Gastrocnemius medialis (tissue), 4 donors: ENCODE measurements at regions of chr11 and their contacts with region 1.

Region 1: DNA sequence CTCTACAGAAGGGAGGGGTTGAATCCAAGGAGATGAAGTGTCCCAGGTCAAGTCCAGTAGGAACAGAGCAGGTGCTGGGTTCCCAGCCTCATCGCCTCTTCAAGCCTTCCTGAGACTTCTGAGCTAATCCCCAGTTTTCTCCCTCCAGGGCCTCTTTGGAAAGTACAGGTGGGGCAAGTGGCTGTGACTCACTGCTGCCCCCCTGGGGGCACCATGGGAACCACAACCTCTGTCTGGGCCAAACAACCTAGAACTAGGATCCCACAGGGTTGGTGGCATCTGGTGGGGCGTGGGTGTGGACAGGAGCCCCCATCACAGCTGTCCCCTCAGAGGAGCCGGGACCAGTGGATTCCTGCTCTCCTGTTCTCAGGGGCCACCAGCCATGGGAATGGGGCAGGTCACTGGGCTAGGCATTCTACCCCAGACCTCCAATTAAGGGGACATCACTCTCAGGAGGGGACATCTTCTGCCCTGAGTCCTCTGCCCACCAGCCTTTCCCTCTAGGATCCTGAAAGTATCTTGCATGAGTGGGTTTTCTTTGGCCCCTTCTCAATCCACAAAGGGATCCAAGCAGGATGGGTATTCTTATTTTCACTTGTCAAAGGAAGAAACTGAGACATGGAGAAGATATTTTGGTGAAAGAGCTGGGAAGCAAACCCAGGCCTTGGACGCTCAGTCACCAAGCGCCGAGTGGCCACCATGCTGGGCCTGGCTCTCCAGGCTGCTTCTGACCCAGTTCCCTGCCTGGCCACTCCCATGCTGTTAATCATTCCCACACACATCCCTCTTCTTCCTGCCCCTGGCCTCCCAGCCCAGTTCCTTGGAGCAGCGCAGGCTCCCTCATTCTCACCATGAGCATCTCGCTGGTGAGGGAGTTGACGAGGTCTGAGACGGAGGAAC is 23.8 kb downstream of the LRRC10B start:
- DNase-seq: peak in 1 of 2 donors; percentile 28
- ATAC-seq: peak; percentile 31 to 55
- H3K4me3 ChIP-seq: no peak overlapping the region
- H3K27ac ChIP-seq: no peak overlapping the region
- H3K4me1 ChIP-seq: no peaks in the 10 kb centered on the region
- H3K27me3 ChIP-seq: no peaks in the 10 kb centered on the region
- CTCF ChIP-seq: peak; percentile 35 to 86 (median 70)
- POLR2A ChIP-seq: no peak

Region 2: DNA sequence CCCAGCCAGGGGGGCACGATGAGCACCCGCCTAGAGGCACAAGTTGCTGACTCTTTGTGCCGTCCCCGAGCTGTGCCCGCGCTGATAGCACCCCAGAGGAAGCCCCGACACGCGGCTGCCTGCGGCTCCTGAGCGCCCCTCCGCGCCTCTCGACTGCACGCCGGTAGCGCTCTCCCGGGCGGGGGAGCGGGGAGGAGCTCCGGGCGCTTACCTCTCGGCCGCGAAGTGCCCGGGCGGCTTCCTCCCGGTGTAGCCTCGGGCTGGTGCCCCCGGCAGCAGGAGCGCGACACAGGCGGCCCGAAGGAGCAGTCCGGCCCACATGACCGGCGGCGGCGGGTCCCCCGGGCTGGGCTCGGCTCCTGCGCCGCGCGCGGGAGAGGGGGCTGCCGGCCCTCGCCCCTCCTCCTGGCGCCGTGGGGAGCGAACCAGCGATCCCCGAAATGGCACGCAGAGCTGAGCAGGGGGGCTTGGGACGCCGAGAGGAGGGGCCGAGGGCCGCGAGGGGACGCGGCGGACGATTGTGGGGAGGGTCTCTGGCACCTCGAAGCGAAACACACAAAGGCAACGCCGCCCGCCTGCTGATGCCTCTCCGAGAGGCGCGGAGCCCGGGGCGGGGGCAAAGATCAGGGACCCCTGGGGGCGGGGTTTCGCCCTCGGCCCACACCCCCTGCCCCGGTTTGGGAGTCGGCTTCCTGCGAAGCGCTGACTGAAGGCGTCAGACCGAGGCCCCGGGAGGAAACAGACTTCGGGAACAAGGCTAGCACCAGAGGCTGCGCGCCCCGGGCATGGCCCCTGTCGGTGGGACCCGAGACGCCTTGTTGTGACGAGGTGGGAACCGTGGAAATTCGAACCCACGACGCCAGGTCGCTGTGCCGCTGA is 237.4 kb before region 1 on chr11 and contains the start of gene VWCE:
- in situ Hi-C with region 1: no loop called
- intact Hi-C with region 1: no loop called
- DNase-seq: peak in 1 of 2 donors; percentile 16
- ATAC-seq: peak; percentile 20 to 39
- H3K4me3 ChIP-seq: peak within 1 kb of the TSS; percentile 45 to 72 (median 57)
- H3K27ac ChIP-seq: no peak within 1 kb of the TSS
- H3K4me1 ChIP-seq: peaks cover 16 to 20% of the 10 kb centered on the region in 2 donors
- H3K27me3 ChIP-seq: peaks cover 0 to 9% (median 7%) of the 10 kb centered on the region in 3 donors
- CTCF ChIP-seq: no peak
- POLR2A ChIP-seq: no peak
- total RNA-seq, gene VWCE: 0.31 to 1.5 (median 0.67) TPM

Region 3: GRCh38 chr11:61406067-61406466 is 126.3 kb before region 1 on chr11:
- in situ Hi-C with region 1: no loop called
- intact Hi-C with region 1: no loop called
- DNase-seq: no peak
- ATAC-seq: peak; percentile 43 to 49
- H3K4me3 ChIP-seq: no peak overlapping the region
- H3K27ac ChIP-seq: peak overlapping the region in 2 of 4 donors; percentile 58 to 60
- H3K4me1 ChIP-seq: peaks cover 4 to 8% of the 10 kb centered on the region in 2 donors
- H3K27me3 ChIP-seq: no peaks in the 10 kb centered on the region
- CTCF ChIP-seq: no peak
- POLR2A ChIP-seq: no peak

Region 4: GRCh38 chr11:61460474-61460881 is 71.9 kb before region 1 on chr11:
- in situ Hi-C with region 1: no loop called
- intact Hi-C with region 1: no loop called
- DNase-seq: peak in 1 of 2 donors; percentile 67
- ATAC-seq: peak; percentile 45 to 79
- H3K4me3 ChIP-seq: no peak overlapping the region
- H3K27ac ChIP-seq: peak overlapping the region; percentile 21 to 38 (median 32)
- H3K4me1 ChIP-seq: peaks cover 9 to 14% of the 10 kb centered on the region in 2 donors
- H3K27me3 ChIP-seq: no peaks in the 10 kb centered on the region
- CTCF ChIP-seq: no peak
- POLR2A ChIP-seq: no peak

Region 5: DNA sequence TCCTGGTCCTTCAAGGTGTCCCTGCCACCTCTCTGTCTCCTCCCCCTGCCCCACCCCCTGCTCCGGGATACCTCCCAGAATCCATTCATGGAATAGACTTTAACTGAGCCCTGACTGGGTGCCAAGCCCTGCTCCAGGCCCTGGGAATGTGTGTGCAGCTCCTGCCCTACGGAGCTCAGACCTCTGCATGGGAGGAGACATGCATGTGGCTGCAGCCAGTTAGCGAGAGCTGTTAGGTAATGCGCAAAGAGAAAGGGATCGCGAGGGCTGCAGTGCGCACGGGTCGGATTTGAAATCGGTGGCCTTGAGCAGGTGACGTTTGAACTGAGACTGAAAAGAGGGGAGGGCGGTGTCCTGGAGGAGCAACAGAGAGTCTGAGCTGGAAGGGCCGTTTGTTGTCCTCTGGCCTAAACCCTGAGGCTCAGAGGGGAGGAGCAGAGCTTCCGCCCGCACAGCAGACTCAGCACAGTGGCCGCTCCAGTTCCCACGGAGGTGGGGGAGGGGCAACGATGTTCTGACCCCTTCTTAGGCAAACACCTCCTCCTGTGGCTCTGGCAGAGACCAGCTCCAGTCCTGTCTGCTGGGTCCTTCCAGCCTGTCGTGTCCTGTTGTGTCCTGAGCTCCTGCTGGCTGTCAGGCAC is 43.6 kb before region 1 on chr11:
- in situ Hi-C with region 1: no loop called
- intact Hi-C with region 1: no loop called
- DNase-seq: peak; percentile 31 to 52
- ATAC-seq: peak; percentile 57 to 59
- H3K4me3 ChIP-seq: no peak overlapping the region
- H3K27ac ChIP-seq: peak overlapping the region; percentile 43 to 66 (median 58)
- H3K4me1 ChIP-seq: peaks cover 0 to 5% of the 10 kb centered on the region in 2 donors
- H3K27me3 ChIP-seq: no peaks in the 10 kb centered on the region
- CTCF ChIP-seq: no peak
- POLR2A ChIP-seq: no peak

Region 6: GRCh38 chr11:61639816-61640443 is 107.5 kb after region 1 on chr11:
- in situ Hi-C with region 1: no loop called
- intact Hi-C with region 1: loop called (anchors 1 kb)
- DNase-seq: no peak
- ATAC-seq: no peak
- H3K4me3 ChIP-seq: no peak overlapping the region
- H3K27ac ChIP-seq: no peak overlapping the region
- H3K4me1 ChIP-seq: no peaks in the 10 kb centered on the region
- H3K27me3 ChIP-seq: no peaks in the 10 kb centered on the region
- CTCF ChIP-seq: no peak
- POLR2A ChIP-seq: no peak